Activated CD4-positive, alpha-beta T cell treated with anti-CD3 and anti-CD28 coated beads for 36 hours (primary cell): ENCODE measurements at regions of chr12 and their contacts with region 1.

Region 1: DNA sequence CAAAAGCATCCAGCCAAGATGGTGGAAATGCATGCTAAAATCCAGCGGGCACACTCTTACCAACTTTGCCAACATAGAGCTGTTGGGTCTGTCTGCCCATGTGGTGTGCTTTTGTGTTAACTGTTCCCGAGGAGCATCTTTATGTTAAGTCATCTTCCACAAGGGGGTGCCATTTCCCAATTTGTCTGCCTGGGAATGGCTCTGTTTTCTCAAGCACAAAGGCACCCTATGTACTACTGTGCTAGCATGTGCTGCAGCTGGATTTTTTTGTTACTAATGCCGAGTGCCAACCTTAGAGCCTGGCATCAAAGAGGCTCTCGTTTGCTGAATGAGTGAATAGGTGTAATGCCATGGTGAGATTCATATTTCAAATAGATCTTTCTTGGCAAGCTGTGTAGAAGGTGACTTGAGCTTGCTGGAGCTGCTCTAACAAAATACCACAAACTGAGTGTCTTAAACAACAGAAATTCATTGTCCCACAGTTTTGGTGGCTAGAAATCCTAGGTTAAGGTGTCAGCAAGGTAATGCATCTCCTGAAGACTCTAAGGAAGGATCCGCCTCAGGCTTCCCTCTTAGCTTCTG is 74.3 kb downstream of the TRHDE start:
- DNase-seq: peak; percentile 64
- ATAC-seq: peak; percentile 64
- H3K4me3 Mint-ChIP-seq: no peak overlapping the region
- H3K27ac Mint-ChIP-seq: no peak overlapping the region
- H3K4me1 Mint-ChIP-seq: no peaks in the 10 kb centered on the region
- H3K27me3 Mint-ChIP-seq: no peaks in the 10 kb centered on the region

Region 2: GRCh38 chr12:72017054-72017651 is 329.3 kb before region 1 on chr12:
- CTCF ChIA-PET with region 1: no interaction called
- POLR2A ChIA-PET with region 1: no interaction called
- intact Hi-C with region 1: loop called in 1 of 2 experiments (anchors 5 kb)
- DNase-seq: peak; percentile 74
- ATAC-seq: peak; percentile 81
- H3K4me3 Mint-ChIP-seq: no peak overlapping the region
- H3K27ac Mint-ChIP-seq: no peak overlapping the region
- H3K4me1 Mint-ChIP-seq: no peaks in the 10 kb centered on the region
- H3K27me3 Mint-ChIP-seq: peaks cover 16% of the 10 kb centered on the region

Region 3: GRCh38 chr12:74317078-74317601 is 1970.7 kb after region 1 on chr12:
- CTCF ChIA-PET with region 1: no interaction called
- POLR2A ChIA-PET with region 1: no interaction called
- intact Hi-C with region 1: loop called in 1 of 2 experiments (anchors 2 kb)
- DNase-seq: no peak
- ATAC-seq: no peak
- H3K4me3 Mint-ChIP-seq: no peak overlapping the region
- H3K27ac Mint-ChIP-seq: no peak overlapping the region
- H3K4me1 Mint-ChIP-seq: no peaks in the 10 kb centered on the region
- H3K27me3 Mint-ChIP-seq: no peaks in the 10 kb centered on the region